CD14-positive monocyte (primary cell): ENCODE measurements at regions of chr5 and their contacts with region 1.

Region 1: DNA sequence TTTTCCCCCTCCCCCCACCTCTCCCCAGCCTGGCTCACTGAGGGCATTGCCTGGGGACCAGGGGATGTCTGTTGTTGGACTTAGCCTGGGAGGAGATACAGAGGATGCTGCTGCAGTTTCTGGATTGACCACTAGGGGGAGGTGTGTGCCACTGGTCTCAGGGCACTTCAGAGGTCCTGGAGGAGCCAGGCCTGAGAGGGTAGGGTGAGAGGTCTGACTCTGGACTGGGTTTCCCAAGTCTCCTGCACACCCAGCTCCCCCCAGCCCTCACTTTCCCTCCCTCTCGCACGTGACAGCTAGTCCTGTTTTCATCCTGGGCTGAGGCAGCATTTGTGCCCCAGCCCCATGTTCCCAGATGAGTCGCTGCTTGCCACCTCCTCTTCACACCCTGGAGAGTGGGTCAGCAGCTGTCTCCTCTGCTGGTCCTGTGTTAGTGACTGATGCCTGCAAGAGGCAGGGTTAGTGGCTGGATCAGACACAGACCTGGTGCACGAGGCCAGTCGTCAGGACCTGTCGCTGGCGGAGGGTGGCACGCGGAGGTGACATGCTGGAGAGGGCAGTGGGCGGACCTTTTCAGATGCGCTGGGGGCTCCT is 4.4 kb downstream of the IL3 start:
- DNase-seq: peak; percentile 55 to 70 (median 67)
- H3K4me3 ChIP-seq: no peak overlapping the region
- H3K4me3 Mint-ChIP-seq: no peak overlapping the region
- H3K27ac ChIP-seq: no peak overlapping the region
- H3K27ac Mint-ChIP-seq: no peak overlapping the region
- H3K4me1 ChIP-seq: peaks cover 7 to 9% of the 10 kb centered on the region in 2 donors
- H3K4me1 Mint-ChIP-seq: peaks cover 11% of the 10 kb centered on the region
- H3K27me3 ChIP-seq: peaks cover 2 to 27% of the 10 kb centered on the region in 2 donors
- H3K27me3 Mint-ChIP-seq: peaks cover 26 to 42% (median 37%) of the 10 kb centered on the region in 3 donors
- CTCF ChIP-seq: peak; percentile 93

Region 2: DNA sequence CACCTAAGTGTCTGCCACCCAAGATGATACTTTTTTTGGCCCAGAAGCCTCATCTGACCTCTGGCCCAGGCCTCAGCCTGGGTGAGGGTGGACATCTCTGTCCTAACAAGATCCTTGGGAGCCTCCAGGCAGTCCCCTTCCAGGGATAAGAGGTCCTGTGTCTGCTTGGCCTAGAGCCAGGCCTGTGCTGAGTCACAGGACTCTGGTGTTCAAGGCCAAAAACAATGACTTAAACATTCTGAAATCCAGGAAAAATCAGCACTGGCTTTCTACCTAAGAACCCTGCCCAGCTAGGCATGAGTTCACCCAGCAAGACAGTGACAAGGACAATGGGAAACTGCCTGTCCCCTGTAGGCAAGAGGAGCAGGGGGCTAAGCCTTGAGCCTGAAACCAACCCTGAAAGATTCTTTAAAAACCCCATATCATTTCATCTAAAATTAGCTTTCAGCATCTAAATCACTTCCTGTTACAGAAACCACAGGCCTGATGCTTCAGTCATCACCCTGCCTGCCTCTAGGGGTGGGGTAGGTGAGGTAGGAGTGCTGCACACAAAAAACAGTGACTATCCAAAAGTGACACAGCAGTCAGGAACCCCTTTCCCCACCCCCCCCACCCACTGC is 38.6 kb after region 1 on chr5:
- intact Hi-C with region 1: loop called in 1 of 2 experiments (anchors 5 kb)
- DNase-seq: peak; percentile 65 to 76 (median 75)
- H3K4me3 ChIP-seq: no peak overlapping the region
- H3K4me3 Mint-ChIP-seq: peak overlapping the region; percentile 24 to 65
- H3K27ac ChIP-seq: peak overlapping the region; percentile 16 to 57
- H3K27ac Mint-ChIP-seq: peak overlapping the region; percentile 66 to 93 (median 73)
- H3K4me1 ChIP-seq: peaks cover 25 to 46% of the 10 kb centered on the region in 2 donors
- H3K4me1 Mint-ChIP-seq: peaks cover 51% of the 10 kb centered on the region
- H3K27me3 ChIP-seq: no peaks in the 10 kb centered on the region
- H3K27me3 Mint-ChIP-seq: peaks cover 11 to 18% (median 14%) of the 10 kb centered on the region in 3 donors
- CTCF ChIP-seq: peak; percentile 10

Region 3: DNA sequence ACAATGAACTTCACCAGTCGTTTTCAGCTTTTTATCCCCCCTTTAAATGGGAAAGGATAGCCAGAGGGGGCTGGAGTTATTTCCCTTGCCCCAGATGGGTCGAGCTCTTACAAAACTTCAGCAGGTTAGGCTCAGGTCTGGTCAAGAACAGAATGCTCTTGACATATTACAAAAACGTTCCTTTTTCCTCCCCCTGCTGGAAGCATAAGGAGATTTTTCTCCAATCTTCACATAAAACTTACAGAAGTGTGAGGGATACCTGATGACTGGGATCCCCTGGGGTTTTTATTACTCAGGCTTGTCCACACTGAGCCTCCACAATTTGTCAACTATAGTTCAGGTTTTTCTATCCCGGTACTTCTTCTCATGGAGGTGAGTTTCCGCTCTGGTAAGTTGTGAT is 69.5 kb after region 1 on chr5:
- intact Hi-C with region 1: loop called in 1 of 2 experiments (anchors 5 kb)
- DNase-seq: no peak
- H3K4me3 ChIP-seq: no peak overlapping the region
- H3K4me3 Mint-ChIP-seq: no peak overlapping the region
- H3K27ac ChIP-seq: no peak overlapping the region
- H3K27ac Mint-ChIP-seq: no peak overlapping the region
- H3K4me1 ChIP-seq: no peaks in the 10 kb centered on the region
- H3K4me1 Mint-ChIP-seq: peaks cover 3% of the 10 kb centered on the region
- H3K27me3 ChIP-seq: no peaks in the 10 kb centered on the region
- H3K27me3 Mint-ChIP-seq: peaks cover 3 to 11% (median 6%) of the 10 kb centered on the region in 3 donors
- CTCF ChIP-seq: peak; percentile 21

Region 4: GRCh38 chr5:132176987-132177386 is 112.2 kb after region 1 on chr5:
- intact Hi-C with region 1: loop called in 1 of 2 experiments (anchors 5 kb)
- DNase-seq: peak; percentile 15 to 28 (median 25)
- H3K4me3 ChIP-seq: no peak overlapping the region
- H3K4me3 Mint-ChIP-seq: peak overlapping the region in 1 of 2 donors; percentile 49
- H3K27ac ChIP-seq: no peak overlapping the region
- H3K27ac Mint-ChIP-seq: no peak overlapping the region
- H3K4me1 ChIP-seq: peaks cover 7 to 12% of the 10 kb centered on the region in 2 donors
- H3K4me1 Mint-ChIP-seq: peaks cover 18% of the 10 kb centered on the region
- H3K27me3 ChIP-seq: no peaks in the 10 kb centered on the region
- H3K27me3 Mint-ChIP-seq: peaks cover under 1 to 7% (median 2%) of the 10 kb centered on the region in 3 donors
- CTCF ChIP-seq: peak; percentile 36

Region 5: DNA sequence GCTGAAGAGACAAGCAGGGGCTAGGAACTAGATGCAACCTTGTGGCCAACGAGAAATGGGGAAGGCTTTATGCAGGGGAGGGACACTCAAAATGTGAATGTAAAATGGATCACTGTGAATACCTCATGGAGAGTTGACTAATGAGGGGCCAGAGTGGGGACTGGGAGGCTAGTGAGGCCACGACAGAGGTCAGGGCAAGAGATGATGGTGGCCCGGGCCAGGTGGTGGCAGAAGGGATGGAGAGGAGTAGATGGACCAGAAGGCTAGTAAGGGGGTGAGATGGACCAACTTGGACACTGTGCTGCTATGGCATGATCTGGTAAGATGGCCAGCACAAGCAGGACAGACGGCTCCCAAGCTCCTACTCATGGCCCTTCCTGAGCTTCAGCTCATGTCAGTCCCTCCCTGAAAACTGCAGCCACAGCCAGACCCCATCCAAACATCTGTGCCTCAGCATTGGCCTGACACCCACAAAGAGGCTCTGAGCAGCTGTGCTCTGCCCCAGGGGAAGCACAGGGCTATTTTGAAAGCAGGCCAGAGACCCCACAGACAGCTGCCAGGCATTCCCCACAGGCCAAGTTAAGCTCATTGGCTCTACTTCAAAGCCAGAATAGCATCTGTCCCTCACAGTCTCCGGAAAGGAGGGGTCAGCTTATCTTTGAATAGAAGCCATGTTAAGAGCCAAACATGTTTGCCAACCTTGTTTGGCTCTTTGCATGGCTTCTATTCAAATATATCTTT is 140.7 kb after region 1 on chr5:
- intact Hi-C with region 1: no loop called
- DNase-seq: no peak
- H3K4me3 ChIP-seq: no peak overlapping the region
- H3K4me3 Mint-ChIP-seq: no peak overlapping the region
- H3K27ac ChIP-seq: no peak overlapping the region
- H3K27ac Mint-ChIP-seq: no peak overlapping the region
- H3K4me1 ChIP-seq: no peaks in the 10 kb centered on the region
- H3K4me1 Mint-ChIP-seq: peaks cover 6% of the 10 kb centered on the region
- H3K27me3 ChIP-seq: no peaks in the 10 kb centered on the region
- H3K27me3 Mint-ChIP-seq: peaks cover 2 to 6% (median 4%) of the 10 kb centered on the region in 3 donors
- CTCF ChIP-seq: no peak